Right ventricle myocardium inferior (tissue), 1 donor: ENCODE measurements at regions of chr16 and their contacts with region 1.

Region 1: DNA sequence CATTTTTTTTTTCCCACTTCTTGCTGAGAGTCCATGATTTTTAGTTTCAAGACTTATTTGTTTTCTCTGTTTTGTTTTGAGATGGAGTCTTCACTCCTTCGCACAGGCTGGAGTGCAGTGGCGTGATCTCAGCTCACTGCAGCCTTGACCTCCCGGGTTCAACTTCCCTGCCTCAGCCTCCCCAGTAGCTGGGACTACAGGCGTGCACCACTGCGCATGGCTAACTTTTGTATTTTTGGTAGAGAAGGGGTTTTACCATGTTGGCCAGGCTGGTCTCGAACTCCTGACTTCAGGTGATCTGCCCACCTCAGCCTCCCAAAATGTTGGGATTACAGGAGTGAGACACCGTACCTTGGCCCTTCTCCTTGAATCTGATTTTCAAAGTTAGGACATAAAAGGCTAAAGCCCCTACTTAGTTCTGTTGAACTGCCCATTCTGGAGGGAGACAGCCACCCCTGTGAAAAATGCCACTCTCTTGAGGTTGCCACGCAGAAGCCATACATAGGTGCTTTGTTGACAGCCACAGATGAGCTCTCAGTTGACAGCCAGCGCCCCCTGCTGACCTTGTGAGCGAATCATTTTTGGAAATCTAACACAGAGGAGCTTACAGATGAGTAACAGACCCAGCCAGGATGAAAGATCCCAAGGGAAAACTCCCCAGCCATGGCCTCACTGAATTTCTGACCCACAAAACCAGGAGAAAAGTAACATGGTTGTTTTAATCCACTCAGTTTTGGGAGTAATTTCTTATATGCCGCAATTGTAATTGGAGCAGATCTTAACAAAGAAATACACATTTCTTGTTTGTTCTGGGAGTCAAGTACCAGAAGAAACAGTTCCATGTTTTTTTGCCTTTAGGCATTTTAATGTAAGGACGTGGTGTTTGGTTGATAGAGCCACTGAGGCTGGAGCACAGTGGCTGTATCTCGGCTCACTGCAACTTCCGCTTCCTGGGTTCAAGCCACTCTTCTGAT is 38.8 kb downstream of the PKD1L3 start:
- DNase-seq: peak; percentile 91
- ATAC-seq: peak; percentile 93

Region 2: GRCh38 chr16:71883849-71884638 is 77.3 kb before region 1 on chr16 and contains the start of gene ZNF821:
- intact Hi-C with region 1: loop called (anchors 2 kb)
- DNase-seq: peak; percentile 89
- ATAC-seq: peak; percentile 90
- total RNA-seq, gene ZNF821: 2.5 TPM

Region 3: DNA sequence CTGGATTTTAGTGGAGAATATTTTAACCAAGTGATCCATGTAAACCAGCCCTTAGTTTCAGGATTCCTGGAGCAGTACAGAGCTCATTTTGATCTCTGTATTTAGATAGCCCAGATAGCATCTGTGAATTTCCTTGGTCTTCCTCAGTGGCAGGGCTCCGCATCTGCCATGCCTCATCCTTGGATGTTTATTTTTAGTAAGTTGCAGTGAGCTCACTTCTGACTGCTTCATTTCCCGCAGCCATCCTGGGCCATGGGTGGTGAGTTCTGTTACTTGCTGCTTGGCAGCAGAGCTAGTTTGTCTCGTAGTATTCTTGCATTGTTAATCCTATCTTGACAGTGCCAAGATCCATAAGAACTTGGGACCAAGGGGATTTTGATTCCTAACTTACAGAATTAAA is 32.3 kb before region 1 on chr16:
- intact Hi-C with region 1: loop called (anchors 1 kb)
- DNase-seq: no peak
- ATAC-seq: no peak

Region 4: GRCh38 chr16:72111657-72112451 is 150.5 kb after region 1 on chr16:
- intact Hi-C with region 1: no loop called
- DNase-seq: peak; percentile 28
- ATAC-seq: no peak

Region 5: DNA sequence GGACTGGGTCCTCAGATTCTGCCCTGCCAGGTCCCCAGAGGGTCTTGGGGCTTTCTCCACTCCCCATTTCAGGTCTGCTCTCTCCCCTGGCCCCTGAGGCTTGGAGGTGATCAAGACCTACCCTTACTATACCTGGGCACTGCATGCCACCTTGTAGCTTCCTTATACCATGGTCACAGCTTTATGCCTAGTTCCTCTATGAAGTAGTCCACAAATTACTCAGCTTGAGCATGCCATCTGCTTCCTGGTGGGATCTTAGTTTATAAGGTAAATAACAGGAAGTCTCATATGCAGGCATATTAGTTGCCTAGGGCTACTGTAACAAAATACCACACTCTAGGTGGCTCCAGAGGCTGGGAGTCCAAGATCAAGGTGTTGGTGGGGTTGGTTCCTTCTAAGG is 221.6 kb after region 1 on chr16:
- intact Hi-C with region 1: no loop called
- DNase-seq: no peak
- ATAC-seq: no peak